HCT116 (cell line): ENCODE measurements at regions of chr1 and their contacts with region 1.

Region 1: DNA sequence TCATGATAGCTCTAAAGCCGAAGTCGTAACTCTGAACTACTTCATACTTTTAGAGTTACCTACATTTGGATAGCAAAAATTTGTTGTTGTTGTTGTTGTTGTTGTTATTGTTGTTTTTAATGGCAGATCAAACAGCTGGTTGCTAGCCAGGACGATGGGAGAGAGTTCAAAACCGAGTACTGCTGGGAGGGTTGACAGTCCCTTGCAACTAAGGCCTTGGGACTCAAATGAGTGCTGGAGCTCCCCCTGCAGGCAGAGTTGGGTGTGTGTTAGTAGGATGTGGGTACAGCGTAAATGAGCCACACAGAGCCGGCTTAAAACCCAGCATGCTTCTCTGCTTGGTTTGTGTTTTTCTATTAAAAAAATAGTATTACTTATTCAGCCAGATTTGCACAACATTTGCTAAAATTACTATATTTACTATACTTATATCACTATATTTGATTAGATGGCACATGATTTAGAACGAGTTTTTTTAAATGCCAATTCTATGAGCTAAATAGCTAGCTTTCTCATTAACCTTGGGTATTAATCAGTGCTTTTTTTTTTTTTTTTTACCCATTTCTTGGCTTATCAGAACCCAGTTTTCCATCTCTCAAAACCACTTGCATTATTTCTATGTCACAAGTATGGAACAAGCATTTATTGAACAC is 129.2 kb upstream of the SYT6 start:
- DNase-seq: peak; percentile 85
- ATAC-seq: peak; percentile 100
- H3K4me3 ChIP-seq: no peak overlapping the region
- H3K27ac ChIP-seq: no peak overlapping the region
- H3K4me1 ChIP-seq: no peaks in the 10 kb centered on the region
- H3K27me3 ChIP-seq: peaks cover 25% of the 10 kb centered on the region
- CTCF ChIP-seq: peak; percentile 77 to 93 (median 82)
- POLR2A ChIP-seq: no peak
- RAD21 ChIP-seq: peak; percentile 77

Region 2: GRCh38 chr1:113835642-113836307 is 447.1 kb before region 1 on chr1:
- CTCF ChIA-PET with region 1: interaction called, 11 read pairs
- POLR2A ChIA-PET with region 1: no interaction called
- RAD21 ChIA-PET with region 1: no interaction called
- intact Hi-C with region 1: loop called (anchors 10 kb)
- DNase-seq: peak; percentile 36
- ATAC-seq: no peak
- H3K4me3 ChIP-seq: no peak overlapping the region
- H3K27ac ChIP-seq: no peak overlapping the region
- H3K4me1 ChIP-seq: no peaks in the 10 kb centered on the region
- H3K27me3 ChIP-seq: no peaks in the 10 kb centered on the region
- CTCF ChIP-seq: peak; percentile 31 to 73 (median 52); a peak in 3 of 6 replicates
- POLR2A ChIP-seq: no peak
- RAD21 ChIP-seq: peak; percentile 82

Region 3: DNA sequence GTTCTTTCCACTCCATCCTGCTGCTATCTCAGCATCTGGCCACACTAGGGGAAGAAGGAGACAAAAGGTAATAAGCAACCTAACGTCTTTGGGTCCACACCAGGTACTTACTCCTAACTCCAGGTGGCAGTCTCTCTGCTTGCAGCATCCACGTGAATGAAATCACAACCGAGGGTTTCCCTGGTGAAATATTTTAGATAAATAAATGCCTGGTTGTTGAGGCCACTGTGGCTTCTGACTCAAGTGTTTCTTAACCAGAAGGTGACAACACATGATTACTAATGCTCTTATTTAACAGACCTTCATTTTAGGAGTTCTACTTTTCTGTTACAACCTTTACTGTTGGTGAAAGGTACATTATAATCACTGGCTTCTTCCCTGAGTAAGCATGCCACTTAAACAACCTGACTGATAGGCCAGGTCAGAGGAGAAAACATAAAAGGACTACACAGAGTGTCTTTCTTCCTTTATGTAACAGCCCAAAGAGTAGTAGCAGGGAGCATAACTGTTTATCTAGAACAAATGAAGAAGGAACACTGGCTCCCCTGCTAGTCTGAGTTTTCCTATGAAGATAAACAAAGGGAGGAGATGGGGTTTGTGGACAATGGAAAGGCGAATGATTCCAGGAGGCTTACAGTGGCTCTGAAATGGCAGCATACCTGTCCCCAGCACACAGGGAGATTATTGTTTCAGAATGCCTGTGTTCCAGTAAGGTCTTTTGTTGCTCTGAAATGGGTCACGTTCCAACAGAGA is 189.1 kb before region 1 on chr1:
- CTCF ChIA-PET with region 1: interaction called, 9 read pairs
- POLR2A ChIA-PET with region 1: no interaction called
- RAD21 ChIA-PET with region 1: no interaction called
- intact Hi-C with region 1: loop called (anchors 1 kb)
- DNase-seq: peak; percentile 23
- ATAC-seq: peak; percentile 87
- H3K4me3 ChIP-seq: no peak overlapping the region
- H3K27ac ChIP-seq: no peak overlapping the region
- H3K4me1 ChIP-seq: no peaks in the 10 kb centered on the region
- H3K27me3 ChIP-seq: peaks cover 49% of the 10 kb centered on the region
- CTCF ChIP-seq: peak; percentile 42 to 56 (median 52); a peak in 5 of 6 replicates
- POLR2A ChIP-seq: no peak
- RAD21 ChIP-seq: peak; percentile 54

Region 4: DNA sequence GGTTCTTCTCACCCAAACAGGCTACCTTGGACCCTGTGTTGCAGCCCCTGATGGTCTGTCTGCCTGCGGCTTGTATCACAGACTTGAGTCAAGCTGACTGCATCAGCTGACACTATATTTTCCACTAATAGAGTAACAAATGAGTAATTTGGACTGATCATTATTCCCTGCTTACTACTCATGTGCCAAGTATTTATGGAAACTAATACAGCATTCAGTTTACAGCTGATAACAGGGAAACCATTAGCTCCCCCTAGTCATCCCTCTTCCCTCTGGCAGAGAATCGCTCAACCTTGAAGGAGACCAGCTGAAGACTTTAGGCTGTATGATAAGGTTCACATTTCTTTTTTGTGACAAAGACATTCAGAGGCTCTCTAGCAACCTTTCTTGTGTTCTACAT is 12.6 kb before region 1 on chr1:
- CTCF ChIA-PET with region 1: interaction called, 17 read pairs
- POLR2A ChIA-PET with region 1: no interaction called
- RAD21 ChIA-PET with region 1: no interaction called
- intact Hi-C with region 1: no loop called
- DNase-seq: no peak
- ATAC-seq: no peak
- H3K4me3 ChIP-seq: no peak overlapping the region
- H3K27ac ChIP-seq: no peak overlapping the region
- H3K4me1 ChIP-seq: no peaks in the 10 kb centered on the region
- H3K27me3 ChIP-seq: peaks cover 58% of the 10 kb centered on the region
- CTCF ChIP-seq: no peak
- POLR2A ChIP-seq: no peak
- RAD21 ChIP-seq: no peak